ENCODE measurements at regions of chrX and their contacts with region 1.

Region 1: GRCh38 chrX:65866146-65866545 is 173.7 kb downstream of the VSIG4 start:
- DNase-seq: peak; percentile 56
- H3K4me3 Mint-ChIP-seq: no peak overlapping the region
- H3K27ac Mint-ChIP-seq: peak overlapping the region; percentile 51
- H3K4me1 Mint-ChIP-seq: peaks cover 33% of the 10 kb centered on the region
- H3K27me3 Mint-ChIP-seq: no peaks in the 10 kb centered on the region

Region 2: DNA sequence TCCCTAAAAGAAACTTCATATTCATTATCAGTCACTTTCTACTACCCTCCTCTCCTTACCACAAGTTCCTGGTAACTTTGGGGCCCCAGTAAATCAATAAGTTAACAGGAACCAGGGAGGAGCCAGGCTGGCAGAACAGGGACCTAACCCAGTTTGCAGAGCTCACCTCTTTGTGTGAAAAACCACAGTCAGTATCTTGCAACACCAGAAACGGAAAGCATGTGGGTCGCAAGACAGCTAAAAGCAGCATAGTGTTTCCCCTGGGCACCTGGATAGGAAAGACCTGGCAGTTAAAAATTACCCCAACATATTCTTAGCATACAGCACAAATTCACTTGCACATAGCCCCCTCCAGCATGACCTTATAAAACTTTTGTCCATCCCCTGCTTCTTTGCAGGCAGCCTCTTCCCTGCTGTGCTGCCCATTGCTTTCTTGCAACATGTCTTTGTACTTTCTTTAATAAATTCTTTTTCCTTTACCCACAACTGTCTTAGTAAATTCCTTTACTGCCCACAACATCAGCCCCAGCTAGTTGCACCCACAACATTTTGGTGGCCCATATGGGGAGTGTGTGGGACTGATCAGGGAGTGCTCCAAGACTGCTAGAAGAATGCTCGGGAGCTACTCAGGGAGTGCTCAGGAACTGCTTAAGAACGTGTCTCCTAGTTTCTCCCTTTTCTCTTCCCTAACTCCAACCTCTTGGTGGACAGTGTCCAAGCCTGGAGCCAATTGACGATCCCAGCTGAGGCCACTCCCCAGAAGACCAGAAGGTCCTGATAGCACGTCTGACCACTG is 115.3 kb before region 1 on chrX:
- CTCF ChIA-PET with region 1: no interaction called
- POLR2A ChIA-PET with region 1: no interaction called
- intact Hi-C with region 1: loop called (anchors 5 kb)
- DNase-seq: peak; percentile 53
- H3K4me3 Mint-ChIP-seq: no peak overlapping the region
- H3K27ac Mint-ChIP-seq: peak overlapping the region; percentile 58
- H3K4me1 Mint-ChIP-seq: peaks cover 64% of the 10 kb centered on the region
- H3K27me3 Mint-ChIP-seq: no peaks in the 10 kb centered on the region

Region 3: DNA sequence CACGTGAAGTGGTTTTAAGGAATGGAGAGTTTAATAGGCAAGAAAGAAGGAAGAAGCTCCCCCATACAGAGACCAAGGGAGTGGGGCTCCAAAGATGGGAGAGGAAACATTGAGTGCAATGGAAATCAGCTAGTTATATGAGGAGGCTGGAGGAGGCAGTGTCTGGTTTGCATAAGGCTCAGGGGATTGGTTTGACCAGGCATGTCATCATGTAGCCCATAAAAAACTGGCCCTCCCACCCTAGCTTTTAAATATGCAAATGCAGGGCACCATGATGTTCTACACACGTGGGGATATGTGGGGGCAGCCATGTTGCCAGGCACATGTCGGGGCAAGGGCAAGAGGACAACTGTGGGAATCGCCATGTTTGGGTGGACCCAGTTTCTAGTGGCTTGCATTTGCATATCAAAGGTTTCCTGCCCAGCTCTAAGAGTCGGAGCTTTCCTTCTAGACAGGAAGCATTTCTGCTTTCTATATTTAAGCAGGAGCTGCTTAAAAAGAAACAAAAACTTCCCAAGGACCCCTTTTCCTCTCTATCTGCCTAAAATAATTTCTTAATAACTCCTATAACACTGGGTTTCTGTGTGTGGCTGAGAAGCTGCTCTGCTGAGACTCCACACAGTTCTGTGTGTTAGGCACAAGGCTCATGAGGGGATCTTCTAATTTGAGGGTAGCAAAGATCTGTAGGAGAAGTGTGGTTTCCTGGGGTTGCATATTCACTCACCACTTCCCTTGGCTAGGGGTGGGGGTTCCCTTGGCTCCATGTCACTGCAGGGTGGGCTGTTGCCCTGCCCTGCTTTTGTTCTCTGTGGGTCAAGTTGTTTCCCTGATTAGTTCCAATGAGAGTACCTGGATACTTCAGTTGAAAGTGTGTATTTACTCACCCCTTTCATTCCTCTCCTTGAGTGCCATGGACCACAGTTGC is 60.2 kb after region 1 on chrX:
- CTCF ChIA-PET with region 1: no interaction called
- POLR2A ChIA-PET with region 1: no interaction called
- intact Hi-C with region 1: loop called (anchors 1 kb)
- DNase-seq: peak; percentile 60
- H3K4me3 Mint-ChIP-seq: no peak overlapping the region
- H3K27ac Mint-ChIP-seq: peak overlapping the region; percentile 72
- H3K4me1 Mint-ChIP-seq: peaks cover 41% of the 10 kb centered on the region
- H3K27me3 Mint-ChIP-seq: no peaks in the 10 kb centered on the region